ENCODE measurements at regions of chr10 and their contacts with region 1.

Region 1: GRCh38 chr10:25068152-25069058 is 52.0 kb downstream of the THNSL1 start:
- DNase-seq: no peak
- ATAC-seq: no peak
- H3K4me3 ChIP-seq: no peak overlapping the region
- H3K27ac ChIP-seq: no peak overlapping the region
- H3K4me1 ChIP-seq: no peaks in the 10 kb centered on the region
- H3K27me3 ChIP-seq: no peaks in the 10 kb centered on the region
- CTCF ChIP-seq: no peak

Region 2: GRCh38 chr10:25026463-25026862 is 41.9 kb before region 1 on chr10:
- intact Hi-C with region 1: loop called in 2 of 10 experiments (anchors 5 to 10 kb)
- DNase-seq: no peak
- ATAC-seq: no peak
- H3K4me3 ChIP-seq: no peak overlapping the region
- H3K27ac ChIP-seq: no peak overlapping the region
- H3K4me1 ChIP-seq: peaks cover 0 to 33% (median 7%) of the 10 kb centered on the region in 9 donors
- H3K27me3 ChIP-seq: no peaks in the 10 kb centered on the region
- CTCF ChIP-seq: peak in 7 of 9 donors; percentile 36 to 61 (median 48)

Measured in heart right ventricle (tissue), 16 donors.